Activated naive CD4-positive, alpha-beta T cell treated with anti-CD3 and anti-CD28 coated beads for 36 hours (primary cell): ENCODE measurements at regions of chr5 and their contacts with region 1.

Region 1: DNA sequence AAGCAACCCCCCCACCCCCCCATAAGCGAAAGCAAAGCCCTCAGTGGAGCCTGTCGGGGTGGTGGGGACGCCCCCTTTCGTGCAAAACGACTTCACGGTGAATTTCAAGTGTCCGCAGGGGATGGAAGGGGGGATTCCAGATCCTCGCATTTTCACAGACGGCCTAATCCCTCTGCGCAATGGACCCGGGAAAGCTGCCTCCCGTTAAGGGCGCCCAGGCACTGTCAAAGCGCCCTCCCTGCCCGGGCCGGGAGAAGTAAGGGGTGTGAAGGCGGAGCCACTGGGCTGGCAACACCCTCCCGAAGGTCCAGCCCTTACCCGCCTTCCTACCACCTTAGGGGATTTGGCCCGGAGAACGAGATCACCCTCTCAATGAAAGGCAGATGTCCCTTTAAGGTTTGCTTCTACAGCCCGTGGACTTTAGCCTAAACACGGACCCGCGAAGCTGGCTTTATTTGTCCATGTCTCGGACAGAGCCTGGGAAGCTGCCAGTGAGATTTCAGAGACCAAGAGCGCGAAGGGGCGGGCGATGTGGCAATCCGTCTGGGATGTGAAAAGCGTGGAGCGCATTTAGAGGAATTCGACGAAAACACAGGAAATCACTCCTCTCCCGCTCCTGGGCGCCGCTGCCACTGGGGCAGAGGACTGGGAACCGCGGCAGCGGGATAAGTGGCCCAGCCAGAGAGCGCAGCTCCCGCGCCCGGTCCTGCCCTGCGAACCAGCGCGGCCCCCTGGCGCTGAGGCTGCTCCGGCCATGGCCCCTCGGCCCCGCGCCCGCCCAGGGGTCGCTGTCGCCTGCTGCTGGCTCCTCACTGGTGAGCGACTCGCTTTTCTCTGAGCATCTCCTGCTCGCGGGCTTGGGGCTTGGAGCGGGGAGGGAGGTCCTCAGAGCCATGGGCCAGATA is at the starts of genes ITGA1 and PELO:
- DNase-seq: peak; percentile 79
- H3K4me3 Mint-ChIP-seq: peak within 1 kb of the TSS; percentile 84
- H3K27ac Mint-ChIP-seq: peak within 1 kb of the TSS; percentile 44
- H3K4me1 Mint-ChIP-seq: peaks cover 15% of the 10 kb centered on the region
- H3K27me3 Mint-ChIP-seq: peaks cover 4% of the 10 kb centered on the region
- total RNA-seq, gene ITGA1: 0.69 to 1.2 TPM
- total RNA-seq, gene PELO: 11.4 to 12.8 TPM

Region 2: GRCh38 chr5:52693280-52693679 is 94.6 kb before region 1 on chr5:
- CTCF ChIA-PET with region 1: interaction called, 3 read pairs
- intact Hi-C with region 1: loop called (anchors 1 kb)
- DNase-seq: peak; percentile 59
- H3K4me3 Mint-ChIP-seq: no peak overlapping the region
- H3K27ac Mint-ChIP-seq: no peak overlapping the region
- H3K4me1 Mint-ChIP-seq: no peaks in the 10 kb centered on the region
- H3K27me3 Mint-ChIP-seq: no peaks in the 10 kb centered on the region

Region 3: DNA sequence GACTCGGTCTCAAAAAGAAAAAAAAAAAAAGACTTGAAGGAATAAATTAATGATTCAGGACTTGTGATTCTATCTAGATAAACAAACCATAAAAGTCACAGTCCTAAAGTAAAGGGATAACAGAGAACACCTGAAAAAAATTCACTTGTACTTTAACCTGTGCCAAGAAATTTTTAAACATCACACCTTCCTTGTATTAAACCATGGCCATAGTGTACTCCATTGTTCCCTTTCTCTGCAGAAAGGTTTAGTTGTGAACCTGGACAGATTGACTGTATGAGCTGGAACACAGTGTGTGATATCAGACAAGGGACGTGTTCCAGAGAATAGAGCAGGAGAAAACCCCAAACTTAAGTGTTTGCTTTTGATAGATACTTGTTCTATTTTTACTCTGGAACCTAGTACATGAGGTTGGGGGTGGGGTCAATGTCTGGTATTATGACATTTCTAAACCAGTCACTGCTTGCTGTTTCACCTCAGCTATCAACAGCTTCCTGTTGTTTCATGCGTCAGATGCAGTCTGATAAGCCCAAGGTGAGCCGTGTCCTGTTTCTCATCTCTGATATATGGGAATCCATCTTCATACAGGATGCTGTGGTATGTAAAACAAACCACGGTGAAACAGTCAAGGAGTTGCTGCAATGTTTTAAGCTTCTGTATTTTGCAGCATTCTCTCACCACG is 62.6 kb before region 1 on chr5:
- CTCF ChIA-PET with region 1: interaction called, 3 read pairs
- intact Hi-C with region 1: loop called (anchors 1 kb)
- DNase-seq: peak; percentile 78
- H3K4me3 Mint-ChIP-seq: no peak overlapping the region
- H3K27ac Mint-ChIP-seq: peak overlapping the region; percentile 27
- H3K4me1 Mint-ChIP-seq: peaks cover 37% of the 10 kb centered on the region
- H3K27me3 Mint-ChIP-seq: no peaks in the 10 kb centered on the region

Region 4: GRCh38 chr5:52743970-52744369 is 43.9 kb before region 1 on chr5:
- CTCF ChIA-PET with region 1: no interaction called
- intact Hi-C with region 1: loop called (anchors 1 kb)
- DNase-seq: peak; percentile 66
- H3K4me3 Mint-ChIP-seq: no peak overlapping the region
- H3K27ac Mint-ChIP-seq: peak overlapping the region; percentile 32
- H3K4me1 Mint-ChIP-seq: peaks cover 44% of the 10 kb centered on the region
- H3K27me3 Mint-ChIP-seq: no peaks in the 10 kb centered on the region

Region 5: GRCh38 chr5:52915176-52915875 is 127.5 kb after region 1 on chr5:
- CTCF ChIA-PET with region 1: interaction called, 8 read pairs
- intact Hi-C with region 1: loop called (anchors 1 kb)
- DNase-seq: peak; percentile 64
- H3K4me3 Mint-ChIP-seq: peak overlapping the region; percentile 27
- H3K27ac Mint-ChIP-seq: no peak overlapping the region
- H3K4me1 Mint-ChIP-seq: peaks cover 9% of the 10 kb centered on the region
- H3K27me3 Mint-ChIP-seq: no peaks in the 10 kb centered on the region

Region 6: DNA sequence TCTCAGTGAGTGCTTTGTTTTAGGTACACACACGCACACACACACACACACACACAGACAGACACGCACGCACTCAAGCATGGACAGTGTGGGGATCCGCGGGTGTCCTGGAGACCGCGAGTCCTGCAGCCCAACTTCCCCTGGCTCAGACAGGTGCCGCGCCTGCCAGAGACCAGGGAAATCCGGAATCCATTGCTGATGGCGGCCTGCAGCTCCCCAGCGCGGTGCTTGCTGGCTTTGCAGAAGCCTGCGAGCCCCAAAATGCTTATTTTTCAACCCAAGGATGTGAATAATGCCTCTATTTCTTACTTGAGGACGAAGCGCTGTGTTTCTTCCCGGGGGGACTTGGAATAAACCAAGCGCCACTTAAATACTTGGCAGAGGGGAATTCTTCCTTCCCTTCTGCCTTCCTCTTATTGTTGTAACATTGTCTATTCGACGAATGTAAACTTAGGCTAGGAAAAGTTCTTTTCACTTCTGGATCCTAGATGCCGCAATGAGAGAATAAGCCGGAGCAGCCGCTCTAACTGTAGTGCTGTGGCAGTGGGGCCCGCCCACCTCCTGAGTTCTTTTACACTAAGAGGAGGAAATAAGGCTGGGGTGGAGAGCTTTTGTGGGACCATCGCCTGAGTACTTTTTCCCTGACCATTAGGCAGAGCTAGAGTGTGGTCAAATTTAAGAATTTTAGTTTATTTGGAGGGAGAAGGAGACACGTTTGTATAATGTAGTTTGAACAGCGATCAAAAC is 202.1 kb after region 1 on chr5:
- CTCF ChIA-PET with region 1: no interaction called
- intact Hi-C with region 1: loop called (anchors 1 kb)
- DNase-seq: peak; percentile 73
- H3K4me3 Mint-ChIP-seq: peak overlapping the region; percentile 79
- H3K27ac Mint-ChIP-seq: peak overlapping the region; percentile 50
- H3K4me1 Mint-ChIP-seq: peaks cover 21% of the 10 kb centered on the region
- H3K27me3 Mint-ChIP-seq: peaks cover 4% of the 10 kb centered on the region

Region 7: GRCh38 chr5:53095931-53096525 is 308.2 kb after region 1 on chr5:
- CTCF ChIA-PET with region 1: no interaction called
- intact Hi-C with region 1: loop called (anchors 1 kb)
- DNase-seq: peak; percentile 89
- H3K4me3 Mint-ChIP-seq: no peak overlapping the region
- H3K27ac Mint-ChIP-seq: no peak overlapping the region
- H3K4me1 Mint-ChIP-seq: peaks cover 4% of the 10 kb centered on the region
- H3K27me3 Mint-ChIP-seq: no peaks in the 10 kb centered on the region